ENCODE measurements at regions of chr14 and their contacts with region 1.

Region 1: GRCh38 chr14:90331497-90332435 is at the start of gene NRDE2:
- DNase-seq: peak; percentile 98
- H3K4me3 ChIP-seq: peak within 1 kb of the TSS; percentile 89
- H3K27ac ChIP-seq: peak within 1 kb of the TSS; percentile 68
- H3K4me1 ChIP-seq: peaks cover 14% of the 10 kb centered on the region
- CTCF ChIP-seq: no peak
- total RNA-seq, gene NRDE2: 12.3 and 15.4 TPM in 2 replicates

Region 2: DNA sequence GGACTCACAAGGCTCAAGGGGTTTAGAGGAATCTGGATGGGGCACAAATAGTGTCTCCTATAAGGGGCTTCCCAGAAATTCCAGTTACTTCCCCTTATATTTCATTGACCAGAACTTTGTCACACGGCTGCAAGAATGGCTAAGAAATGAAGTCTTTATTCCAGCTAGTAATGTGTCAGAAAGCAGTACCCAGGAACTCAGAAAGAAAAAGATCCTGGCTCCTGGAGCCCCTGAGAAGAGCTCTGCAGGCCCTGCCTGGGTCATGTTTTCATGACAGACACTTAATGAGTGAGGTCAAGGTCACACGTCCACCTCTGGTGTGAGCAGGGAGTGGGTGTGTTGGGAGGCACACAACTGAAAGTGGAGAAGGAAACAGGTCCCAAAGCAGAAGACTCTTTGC is 252.2 kb before region 1 on chr14:
- CTCF ChIA-PET with region 1: no interaction called
- POLR2A ChIA-PET with region 1: no interaction called
- intact Hi-C with region 1: no loop called
- DNase-seq: no peak
- H3K4me3 ChIP-seq: no peak overlapping the region
- H3K27ac ChIP-seq: no peak overlapping the region
- H3K4me1 ChIP-seq: no peaks in the 10 kb centered on the region
- CTCF ChIP-seq: no peak

Region 3: GRCh38 chr14:90256354-90257131 is 75.2 kb before region 1 on chr14 and contains the start of gene PSMC1:
- CTCF ChIA-PET with region 1: no interaction called
- POLR2A ChIA-PET with region 1: no interaction called
- intact Hi-C with region 1: loop called (anchors 5 kb)
- DNase-seq: peak; percentile 94
- H3K4me3 ChIP-seq: peak within 1 kb of the TSS; percentile 90
- H3K27ac ChIP-seq: peak within 1 kb of the TSS; percentile 53
- H3K4me1 ChIP-seq: peaks cover 28% of the 10 kb centered on the region
- CTCF ChIP-seq: no peak
- total RNA-seq, gene PSMC1: 100 and 117 TPM in 2 replicates

Region 4: DNA sequence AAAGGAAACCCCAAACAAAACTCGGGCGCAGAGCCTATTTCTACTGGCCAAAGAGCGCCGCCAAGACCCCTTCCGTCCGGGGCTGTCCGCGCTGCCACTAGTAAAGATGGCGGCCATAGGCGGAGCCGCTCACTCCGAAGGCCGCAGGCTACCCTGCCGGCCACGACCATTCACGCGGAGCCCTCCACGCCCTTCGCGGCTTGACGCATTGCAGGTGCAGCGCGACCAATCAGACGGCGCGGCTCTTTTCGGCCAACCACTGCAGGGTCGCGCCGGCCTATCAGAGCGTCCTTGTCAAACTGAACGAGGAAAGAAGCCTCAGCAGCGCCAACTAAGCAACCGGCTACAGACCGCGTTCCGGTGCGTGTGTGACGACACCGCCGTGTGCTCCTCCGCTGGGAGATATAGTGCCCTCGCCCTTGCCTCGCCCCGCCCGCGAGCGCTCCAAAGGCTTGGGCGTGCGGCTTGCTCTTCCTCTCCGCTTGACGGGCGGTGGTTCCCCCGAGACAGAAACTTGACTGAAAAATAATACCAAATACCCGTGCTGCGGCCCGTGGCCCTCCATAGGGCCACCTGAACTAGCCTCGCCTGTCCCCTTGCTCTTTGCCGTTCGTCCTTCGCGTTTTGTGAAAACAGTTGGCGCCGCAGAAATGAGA is 51.4 kb after region 1 on chr14:
- CTCF ChIA-PET with region 1: interaction called, 3 read pairs
- POLR2A ChIA-PET with region 1: interaction called, 6 read pairs
- intact Hi-C with region 1: loop called (anchors 2 kb)
- DNase-seq: peak; percentile 99
- H3K4me3 ChIP-seq: peak overlapping the region; percentile 76
- H3K27ac ChIP-seq: peak overlapping the region; percentile 79
- H3K4me1 ChIP-seq: peaks cover 29% of the 10 kb centered on the region
- CTCF ChIP-seq: 0 out of 2 replicates have a peak, but pooled peaks have one; percentile 38